ENCODE measurements at regions of chr5 and their contacts with region 1.

Region 1: DNA sequence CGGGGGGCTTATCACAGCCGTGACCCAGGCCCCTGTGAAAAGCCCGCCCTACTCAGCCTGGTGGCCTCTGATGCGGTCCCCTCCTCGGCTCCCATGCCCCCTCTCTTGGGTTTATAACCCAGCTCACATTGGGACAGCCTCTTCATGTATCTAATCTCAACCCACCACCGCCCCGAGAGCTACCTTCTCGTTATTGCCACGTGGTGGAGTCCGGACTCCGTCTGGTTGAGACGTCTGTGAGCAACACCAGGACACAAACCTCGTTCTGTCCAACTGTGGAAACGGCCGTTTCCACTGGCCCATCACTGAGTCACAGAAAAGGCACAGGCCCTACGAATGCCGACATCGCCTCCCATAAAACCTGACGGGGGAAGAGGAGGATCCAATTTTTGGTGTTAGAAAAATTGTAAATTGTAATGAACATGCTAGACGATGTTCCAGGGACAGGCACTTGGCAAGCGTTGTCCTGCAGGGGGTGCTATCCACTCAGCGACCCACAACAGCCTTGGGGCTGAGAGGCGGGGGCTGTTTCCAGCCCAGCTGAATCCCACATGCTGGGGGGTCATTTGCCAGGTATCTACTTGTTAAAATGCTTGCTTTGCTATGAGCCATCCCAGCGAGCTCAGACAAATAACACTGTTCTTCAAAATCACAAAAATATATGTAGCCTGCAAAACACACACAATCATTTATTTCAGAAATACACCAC is 37.3 kb upstream of the N4BP3 start:
- DNase-seq: peak; percentile 90
- ATAC-seq: peak; percentile 90
- H3K4me3 Mint-ChIP-seq: peak overlapping the region; percentile 58
- H3K27ac Mint-ChIP-seq: peak overlapping the region; percentile 51
- H3K4me1 Mint-ChIP-seq: peaks cover 15% of the 10 kb centered on the region
- H3K27me3 Mint-ChIP-seq: peaks cover 7% of the 10 kb centered on the region
- CTCF ChIP-seq: peak; percentile 98

Region 2: DNA sequence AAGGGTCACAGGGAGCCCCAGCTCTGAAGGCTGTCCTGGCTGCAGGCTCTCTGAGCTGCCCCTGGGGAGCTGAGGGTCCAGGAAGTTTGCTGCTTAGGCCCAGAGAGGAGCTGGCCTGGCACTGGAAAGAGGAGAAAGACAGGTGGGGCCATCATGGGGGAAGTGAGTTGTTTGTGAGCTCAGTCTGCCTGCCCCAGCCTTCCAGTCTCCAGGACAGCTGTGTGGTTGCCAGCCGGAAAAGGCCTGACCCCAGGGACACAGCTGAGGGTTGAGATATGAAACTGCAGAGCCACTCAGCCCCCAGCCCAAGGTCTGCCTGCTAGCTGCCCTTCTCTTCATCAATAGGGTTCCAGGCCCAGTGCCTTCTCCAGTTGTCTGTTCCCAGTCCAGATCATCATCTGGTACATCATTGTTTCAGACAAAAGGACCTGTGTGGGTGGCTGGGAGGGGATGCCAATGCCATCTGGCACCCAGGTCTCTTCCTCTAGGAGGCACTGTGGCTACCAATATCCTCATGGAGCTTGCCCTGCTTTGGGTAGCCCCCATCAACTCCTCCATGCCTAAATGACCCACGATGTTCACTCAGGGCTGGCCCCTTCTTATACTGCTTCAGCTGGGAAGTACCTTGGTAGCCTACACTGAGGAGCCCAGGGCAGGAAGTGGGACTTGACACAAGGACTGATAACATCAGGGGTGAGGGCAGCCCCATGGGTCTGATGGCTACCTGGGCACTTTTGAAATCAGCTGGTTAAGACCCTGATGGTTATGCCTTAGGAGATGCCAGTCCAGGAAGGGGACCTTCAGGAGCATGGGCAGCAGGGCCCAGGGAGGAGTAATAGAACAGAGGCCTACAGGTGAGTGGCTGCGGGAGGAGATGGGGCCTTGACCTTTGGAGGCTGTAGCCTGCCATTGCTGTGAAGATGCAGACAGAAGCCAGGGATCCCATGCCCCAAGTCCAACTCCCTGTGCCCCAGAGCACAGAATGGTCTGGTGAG is 554.8 kb before region 1 on chr5:
- CTCF ChIA-PET with region 1: no interaction called
- POLR2A ChIA-PET with region 1: no interaction called
- intact Hi-C with region 1: no loop called
- DNase-seq: no peak
- ATAC-seq: no peak
- H3K4me3 Mint-ChIP-seq: no peak overlapping the region
- H3K27ac Mint-ChIP-seq: peak overlapping the region; percentile 78
- H3K4me1 Mint-ChIP-seq: peaks cover 27% of the 10 kb centered on the region
- H3K27me3 Mint-ChIP-seq: no peaks in the 10 kb centered on the region
- CTCF ChIP-seq: no peak

Region 3: GRCh38 chr5:178104492-178104891 is 28.5 kb after region 1 on chr5:
- CTCF ChIA-PET with region 1: interaction called, 22 read pairs
- POLR2A ChIA-PET with region 1: no interaction called
- intact Hi-C with region 1: no loop called
- DNase-seq: no peak
- ATAC-seq: peak; percentile 53
- H3K4me3 Mint-ChIP-seq: no peak overlapping the region
- H3K27ac Mint-ChIP-seq: no peak overlapping the region
- H3K4me1 Mint-ChIP-seq: peaks cover 17% of the 10 kb centered on the region
- H3K27me3 Mint-ChIP-seq: no peaks in the 10 kb centered on the region
- CTCF ChIP-seq: no peak

Region 4: DNA sequence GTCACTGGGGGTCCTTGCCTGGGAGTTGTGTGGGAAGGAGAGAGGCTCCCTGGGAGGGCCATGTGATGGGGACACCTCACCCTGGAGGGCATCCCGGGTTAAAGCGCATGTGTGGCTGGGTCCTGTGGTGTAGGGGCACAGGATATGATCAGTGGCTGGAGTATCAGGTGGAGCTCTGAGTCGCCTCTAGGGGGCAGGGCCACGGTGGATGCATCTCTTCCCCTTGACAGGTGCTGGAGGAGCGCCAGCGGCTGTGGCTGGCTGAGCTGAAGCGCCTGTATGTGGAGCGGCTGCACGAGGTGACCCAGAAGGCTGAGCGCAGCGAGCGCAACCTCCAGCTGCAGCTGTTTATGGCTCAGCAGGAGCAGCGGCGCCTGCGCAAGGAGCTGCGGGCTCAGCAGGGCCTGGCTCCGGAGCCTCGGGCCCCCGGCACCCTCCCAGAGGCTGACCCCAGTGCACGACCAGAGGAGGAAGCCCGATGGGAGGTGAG is 44.9 kb after region 1 on chr5:
- CTCF ChIA-PET with region 1: interaction called, 32 read pairs
- POLR2A ChIA-PET with region 1: no interaction called
- intact Hi-C with region 1: no loop called
- DNase-seq: peak; percentile 94
- ATAC-seq: peak; percentile 74
- H3K4me3 Mint-ChIP-seq: no peak overlapping the region
- H3K27ac Mint-ChIP-seq: no peak overlapping the region
- H3K4me1 Mint-ChIP-seq: peaks cover 36% of the 10 kb centered on the region
- H3K27me3 Mint-ChIP-seq: no peaks in the 10 kb centered on the region
- CTCF ChIP-seq: peak; percentile 67

Region 5: GRCh38 chr5:178146020-178146820 is 70.2 kb after region 1 on chr5:
- CTCF ChIA-PET with region 1: interaction called, 319 read pairs
- POLR2A ChIA-PET with region 1: interaction called, 3 read pairs
- intact Hi-C with region 1: loop called (anchors 5 kb)
- DNase-seq: peak; percentile 87
- ATAC-seq: peak; percentile 71
- H3K4me3 Mint-ChIP-seq: no peak overlapping the region
- H3K27ac Mint-ChIP-seq: peak overlapping the region; percentile 67
- H3K4me1 Mint-ChIP-seq: peaks cover 41% of the 10 kb centered on the region
- H3K27me3 Mint-ChIP-seq: no peaks in the 10 kb centered on the region
- CTCF ChIP-seq: peak; percentile 86

Region 6: DNA sequence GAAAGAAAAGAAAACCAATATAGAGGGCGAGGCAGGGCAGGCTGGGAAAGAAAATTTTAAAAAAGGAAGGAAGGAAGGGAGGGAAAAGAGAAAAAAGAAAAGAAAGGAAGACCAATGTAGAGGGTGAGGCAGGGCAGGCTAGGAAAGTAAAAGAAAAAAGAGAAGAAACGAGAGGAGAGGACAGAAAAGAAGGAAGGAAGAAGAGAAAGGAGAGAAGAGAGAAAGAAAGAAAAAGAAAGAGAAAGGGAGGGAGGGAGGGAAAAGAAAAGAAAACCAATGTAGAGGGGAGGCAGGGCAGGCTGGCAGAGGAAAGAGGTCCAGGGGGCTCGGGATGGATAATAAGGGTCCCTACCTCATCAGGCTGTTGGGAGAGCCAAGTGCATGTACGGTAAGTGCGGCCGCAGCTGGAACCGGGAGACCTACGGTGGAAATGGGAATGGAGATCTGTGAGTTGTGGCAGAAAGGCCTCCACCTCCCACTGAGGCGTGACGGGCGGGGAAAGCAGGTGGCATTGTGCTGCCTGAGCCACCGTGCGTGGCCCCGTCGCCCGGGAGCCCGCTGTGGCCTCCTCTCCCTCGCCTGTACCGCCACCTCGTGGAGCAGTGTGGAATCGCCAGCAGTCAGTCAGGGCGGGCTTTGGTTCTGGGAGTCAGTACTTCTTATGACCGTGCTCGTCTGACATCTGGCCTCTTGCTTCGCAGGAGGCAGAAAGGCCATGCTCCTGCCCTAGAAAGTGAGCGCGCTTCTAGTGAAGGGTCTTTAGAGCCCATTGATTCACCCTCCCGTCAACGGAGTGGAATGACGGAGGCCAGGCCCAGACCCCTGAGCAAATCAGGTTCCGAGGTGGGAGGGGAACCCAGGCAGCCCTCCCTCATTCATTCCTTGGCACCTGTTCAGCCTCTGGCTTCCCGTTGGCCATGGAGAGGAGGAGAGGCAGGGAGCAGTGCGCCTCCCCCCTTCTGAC is 88.1 kb after region 1 on chr5:
- CTCF ChIA-PET with region 1: interaction called, 319 read pairs
- POLR2A ChIA-PET with region 1: interaction called, 3 read pairs
- intact Hi-C with region 1: loop called (anchors 1 kb)
- DNase-seq: peak; percentile 91
- ATAC-seq: peak; percentile 100
- H3K4me3 Mint-ChIP-seq: peak overlapping the region; percentile 44
- H3K27ac Mint-ChIP-seq: no peak overlapping the region
- H3K4me1 Mint-ChIP-seq: peaks cover 6% of the 10 kb centered on the region
- H3K27me3 Mint-ChIP-seq: peaks cover 6% of the 10 kb centered on the region
- CTCF ChIP-seq: peak; percentile 98

Region 7: GRCh38 chr5:178182158-178182876 is 106.3 kb after region 1 on chr5:
- CTCF ChIA-PET with region 1: interaction called, 14 read pairs
- POLR2A ChIA-PET with region 1: no interaction called
- intact Hi-C with region 1: no loop called
- DNase-seq: no peak
- ATAC-seq: peak; percentile 53
- H3K4me3 Mint-ChIP-seq: no peak overlapping the region
- H3K27ac Mint-ChIP-seq: peak overlapping the region; percentile 63
- H3K4me1 Mint-ChIP-seq: peaks cover 7% of the 10 kb centered on the region
- H3K27me3 Mint-ChIP-seq: peaks cover 2% of the 10 kb centered on the region
- CTCF ChIP-seq: no peak